ENCODE measurements at regions of chr6 and their contacts with region 1.

Region 1: GRCh38 chr6:41735427-41736356 is at the start of gene TFEB:
- H3K4me3 ChIP-seq: peak within 1 kb of the TSS; percentile 58
- H3K27ac ChIP-seq: peak within 1 kb of the TSS; percentile 58; the same call in 1 of the 2 replicates
- H3K4me1 ChIP-seq: 0 out of 2 replicates have a peak, but pooled peaks cover 3% of the 10 kb centered on the region
- CTCF ChIP-seq: peak; percentile 88

Region 2: DNA sequence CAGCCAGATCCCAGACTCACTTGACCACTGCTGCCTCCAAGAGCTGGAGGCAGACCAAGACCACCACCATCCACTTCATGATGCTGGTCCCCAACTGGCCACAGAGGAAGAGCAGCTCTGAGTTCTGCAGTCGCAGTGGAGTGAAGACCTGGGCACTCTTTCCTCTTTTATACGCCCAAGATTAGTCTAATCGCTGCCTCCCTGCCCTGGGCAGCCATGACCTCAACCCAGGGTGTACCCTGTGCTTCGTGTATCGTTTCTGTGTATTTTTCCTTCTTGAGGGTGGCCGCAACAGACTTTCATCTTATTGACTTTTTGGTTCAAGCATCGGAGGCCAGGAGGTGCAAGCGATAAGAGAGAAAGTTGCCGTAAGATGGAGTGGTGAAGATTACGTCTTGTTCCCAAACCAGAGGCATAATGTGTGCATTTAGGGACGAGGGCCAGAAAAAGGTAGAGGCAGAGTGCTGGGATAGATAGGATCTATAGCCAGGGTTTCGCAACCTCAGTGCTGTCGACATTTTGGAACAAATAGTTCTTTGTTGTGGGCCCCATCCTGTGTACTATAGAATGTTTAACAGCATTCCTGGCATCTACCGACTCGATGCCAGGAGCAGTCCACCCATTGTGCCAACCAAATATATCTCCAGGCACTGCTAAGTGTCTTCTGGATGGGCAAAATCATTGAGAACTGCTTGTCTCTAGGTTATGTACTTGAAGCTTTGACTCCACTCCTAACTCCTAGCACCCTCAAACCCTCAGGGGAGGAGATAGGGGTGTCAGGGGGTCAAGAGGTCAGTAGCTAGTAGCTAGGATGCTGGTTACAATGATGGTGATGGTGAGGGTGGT is 11.8 kb after region 1 on chr6 and contains the start of gene PGC:
- CTCF ChIA-PET with region 1: interaction called, 18 read pairs
- POLR2A ChIA-PET with region 1: interaction called, 6 read pairs
- H3K4me3 ChIP-seq: no peak within 1 kb of the TSS
- H3K27ac ChIP-seq: no peak within 1 kb of the TSS
- H3K4me1 ChIP-seq: no peaks in the 10 kb centered on the region
- CTCF ChIP-seq: no peak

Region 3: DNA sequence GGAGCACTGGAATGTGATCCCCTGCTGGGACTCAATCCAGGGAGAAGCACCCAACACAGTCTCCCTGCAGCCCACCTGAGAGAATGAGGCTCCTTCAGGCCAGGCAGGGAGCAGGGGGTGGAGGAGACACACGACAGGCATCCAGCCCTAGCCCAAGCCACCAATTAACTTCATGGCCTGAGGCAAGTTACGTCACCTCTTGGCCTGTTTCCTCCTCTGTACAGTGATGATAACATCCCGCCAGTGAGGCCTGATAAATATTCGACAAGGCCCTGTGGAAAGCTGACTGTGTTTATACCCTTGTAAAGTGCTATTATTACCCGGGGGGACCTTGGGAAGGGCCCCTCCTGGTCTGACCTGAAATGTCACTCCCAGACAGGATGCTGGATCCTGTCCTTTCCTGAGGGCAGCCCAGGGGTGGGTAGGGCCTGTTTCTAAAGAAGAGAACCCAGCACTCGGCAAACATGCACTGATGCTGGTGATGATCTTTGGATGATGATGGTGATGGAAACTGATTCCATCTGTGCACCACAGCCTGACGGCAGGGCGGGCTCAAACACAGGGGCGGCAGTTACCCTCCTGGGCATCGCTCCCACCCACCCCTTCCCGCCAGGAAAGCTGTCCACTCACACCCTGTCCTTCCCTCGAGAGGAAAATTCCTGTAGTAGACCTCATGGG is 31.6 kb after region 1 on chr6:
- CTCF ChIA-PET with region 1: interaction called, 7 read pairs
- POLR2A ChIA-PET with region 1: interaction called, 11 read pairs
- H3K4me3 ChIP-seq: no peak overlapping the region
- H3K27ac ChIP-seq: peak overlapping the region; percentile 63
- H3K4me1 ChIP-seq: peaks cover 4% of the 10 kb centered on the region; the same call in 1 of the 2 replicates
- CTCF ChIP-seq: no peak

Region 4: DNA sequence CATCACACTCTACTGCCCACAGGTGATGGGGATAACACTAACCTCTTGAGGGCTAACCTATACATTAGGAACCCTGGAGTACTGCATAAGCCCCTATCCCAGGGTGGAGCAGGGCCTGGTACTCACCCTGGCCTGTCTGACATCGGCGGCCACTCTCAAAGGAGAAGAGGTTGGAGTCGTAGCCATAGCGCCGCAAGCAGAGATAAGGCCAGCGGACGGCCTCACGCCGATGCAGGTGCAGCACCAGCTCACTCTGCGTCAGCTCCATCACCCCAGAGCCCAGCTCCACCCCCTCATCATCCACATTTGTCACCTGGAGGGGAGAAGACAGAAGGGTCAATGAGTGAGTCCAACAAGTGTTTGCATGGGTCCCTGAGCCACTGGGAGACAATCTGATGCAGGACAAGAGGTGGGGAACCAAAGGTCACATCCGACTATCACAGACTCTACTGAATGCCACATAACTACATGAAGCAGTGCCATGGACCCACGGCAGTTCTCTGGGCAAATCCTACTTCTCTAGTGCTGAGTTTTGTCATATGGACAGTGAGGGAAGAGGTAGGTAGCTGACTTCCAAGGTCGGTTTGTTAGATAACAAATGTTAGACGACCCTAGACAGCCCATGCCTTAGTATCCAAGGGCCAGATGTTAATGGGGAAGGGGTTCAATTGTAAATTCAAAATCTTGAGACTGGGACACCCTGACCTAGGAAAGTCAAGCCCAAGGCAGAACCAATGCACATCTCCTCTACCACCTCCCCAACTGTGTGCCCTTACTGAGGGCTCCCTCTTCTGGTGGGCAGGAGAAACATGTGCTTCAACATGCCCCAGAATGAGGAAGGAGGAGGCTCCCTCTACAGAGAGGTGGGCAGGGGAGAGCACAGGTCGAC is 39.8 kb after region 1 on chr6:
- CTCF ChIA-PET with region 1: interaction called, 51 read pairs
- POLR2A ChIA-PET with region 1: interaction called, 6 read pairs
- H3K4me3 ChIP-seq: no peak overlapping the region
- H3K27ac ChIP-seq: no peak overlapping the region
- H3K4me1 ChIP-seq: peaks cover 3% of the 10 kb centered on the region; the same call in 1 of the 2 replicates
- CTCF ChIP-seq: peak; percentile 88